Activated naive CD8-positive, alpha-beta T cell treated with anti-CD3 and anti-CD28 coated beads, Interleukin-2, amount 10 ng/mL, durations not matched to agents 7 days and 5 days (primary cell): ENCODE measurements at regions of chr6 and their contacts with region 1.

Region 1: GRCh38 chr6:2940010-2940850 is 31.1 kb downstream of the SERPINB6 start:
- DNase-seq: peak; percentile 72
- ATAC-seq: peak; percentile 82
- H3K4me3 Mint-ChIP-seq: peak overlapping the region; percentile 84
- H3K27ac Mint-ChIP-seq: peak overlapping the region; percentile 96
- H3K4me1 Mint-ChIP-seq: peaks cover 44% of the 10 kb centered on the region
- H3K27me3 Mint-ChIP-seq: no peaks in the 10 kb centered on the region

Region 2: GRCh38 chr6:2841264-2842138 is 98.7 kb before region 1 on chr6 and contains the start of gene SERPINB1:
- POLR2A ChIA-PET with region 1: interaction called, 32 read pairs
- DNase-seq: peak; percentile 85
- ATAC-seq: peak; percentile 88
- H3K4me3 Mint-ChIP-seq: peak within 1 kb of the TSS; percentile 83
- H3K27ac Mint-ChIP-seq: peak within 1 kb of the TSS; percentile 87
- H3K4me1 Mint-ChIP-seq: peaks cover 38% of the 10 kb centered on the region
- H3K27me3 Mint-ChIP-seq: no peaks in the 10 kb centered on the region
- total RNA-seq, gene SERPINB1: 58.6 to 59.8 TPM

Region 3: GRCh38 chr6:2853761-2854395 is 86.4 kb before region 1 on chr6:
- POLR2A ChIA-PET with region 1: interaction called, 28 read pairs
- DNase-seq: peak; percentile 67
- ATAC-seq: peak; percentile 46
- H3K4me3 Mint-ChIP-seq: peak overlapping the region; percentile 60
- H3K27ac Mint-ChIP-seq: peak overlapping the region; percentile 95
- H3K4me1 Mint-ChIP-seq: peaks cover 66% of the 10 kb centered on the region
- H3K27me3 Mint-ChIP-seq: no peaks in the 10 kb centered on the region

Region 4: DNA sequence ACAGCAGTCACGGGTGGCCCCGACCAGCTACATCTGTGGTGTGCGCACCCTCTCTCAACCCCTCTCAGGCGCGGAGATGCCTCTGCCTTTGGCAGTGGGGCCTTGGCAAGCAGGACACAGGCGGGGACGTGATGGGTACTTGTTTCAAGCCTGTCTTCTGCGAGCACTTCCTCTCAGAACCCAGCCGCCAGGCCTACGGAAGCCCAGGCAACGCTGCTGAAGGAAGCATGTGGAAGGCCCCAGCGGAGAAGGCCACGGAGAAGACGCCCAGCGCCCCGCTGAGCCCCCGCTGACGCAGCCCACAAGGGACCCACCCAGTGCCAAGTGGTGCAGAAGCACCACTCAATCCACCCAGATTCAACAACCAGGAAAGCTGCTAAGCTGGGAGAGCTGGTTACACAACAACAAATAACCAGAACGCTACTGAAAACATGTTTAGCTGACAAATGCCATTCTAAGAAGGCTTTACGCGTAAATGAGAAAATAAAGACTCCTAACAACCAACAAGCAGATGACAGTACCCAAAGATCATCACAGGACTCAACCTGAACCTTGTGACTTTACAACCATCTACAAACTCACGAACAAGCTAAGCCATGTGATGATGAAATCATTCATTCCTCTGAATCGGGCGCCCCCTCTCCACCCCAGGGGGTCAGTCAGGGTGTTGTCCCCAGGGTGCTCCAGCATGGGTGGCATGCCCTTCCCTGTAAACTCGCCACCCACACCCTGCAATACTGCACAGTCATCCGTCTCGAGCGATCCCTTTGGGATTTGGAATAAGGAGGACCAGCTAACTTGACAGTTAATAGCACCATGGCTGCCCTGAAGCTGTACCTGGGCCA is 18.3 kb after region 1 on chr6:
- POLR2A ChIA-PET with region 1: interaction called, 18 read pairs
- DNase-seq: no peak
- ATAC-seq: peak; percentile 80
- H3K4me3 Mint-ChIP-seq: peak overlapping the region; percentile 37
- H3K27ac Mint-ChIP-seq: peak overlapping the region; percentile 64
- H3K4me1 Mint-ChIP-seq: peaks cover 13% of the 10 kb centered on the region
- H3K27me3 Mint-ChIP-seq: no peaks in the 10 kb centered on the region

Region 5: DNA sequence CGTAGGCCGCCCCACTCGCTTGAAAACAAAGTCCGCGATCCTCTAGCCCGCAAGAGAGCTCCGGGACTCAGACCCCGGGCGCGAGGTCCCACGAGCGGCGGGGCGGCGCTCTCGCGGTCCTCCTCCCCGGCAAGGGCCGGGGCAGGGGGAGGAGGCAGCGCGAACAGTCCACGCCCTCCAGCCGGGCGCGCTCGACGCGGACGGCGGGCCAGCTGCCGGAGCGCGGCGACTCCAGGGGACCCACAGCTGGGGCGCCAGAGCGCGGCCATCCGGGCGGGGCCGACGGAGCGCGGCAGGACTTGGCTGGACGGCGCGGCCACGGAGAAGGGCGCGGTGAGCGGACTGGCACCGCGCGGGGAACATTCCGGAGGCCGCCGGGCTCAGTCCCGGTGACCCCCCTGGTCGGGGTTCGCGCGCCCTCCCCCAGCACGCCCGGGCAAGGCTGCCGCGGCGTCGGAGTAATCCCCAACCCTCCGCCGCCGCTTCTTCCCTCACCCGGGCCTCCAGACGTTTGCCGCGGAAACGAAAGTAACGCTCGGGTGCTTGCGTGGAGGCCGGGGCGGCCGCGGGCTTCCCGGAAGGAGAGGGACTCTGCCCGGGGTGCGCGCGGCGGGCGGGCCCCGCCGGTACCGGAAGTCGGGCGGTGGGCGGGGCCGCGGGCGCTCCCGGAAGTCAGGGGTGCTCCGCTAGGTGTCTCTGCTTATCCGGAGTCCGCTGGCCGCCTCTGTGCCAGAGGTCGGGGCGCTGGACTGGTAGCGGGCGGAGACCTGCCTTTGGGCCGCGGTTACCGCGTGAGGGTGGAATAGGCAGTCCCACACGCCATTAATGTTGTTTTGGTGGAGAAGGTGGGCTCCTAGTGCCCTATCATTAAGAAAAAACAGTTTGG is 128.3 kb after region 1 on chr6 and contains the start of gene RIPK1:
- POLR2A ChIA-PET with region 1: interaction called, 13 read pairs
- DNase-seq: peak; percentile 99
- ATAC-seq: peak; percentile 80
- H3K4me3 Mint-ChIP-seq: peak within 1 kb of the TSS; percentile 95
- H3K27ac Mint-ChIP-seq: peak within 1 kb of the TSS; percentile 96
- H3K4me1 Mint-ChIP-seq: peaks cover 44% of the 10 kb centered on the region
- H3K27me3 Mint-ChIP-seq: no peaks in the 10 kb centered on the region
- total RNA-seq, gene RIPK1: 31.9 to 32.6 TPM

Region 6: DNA sequence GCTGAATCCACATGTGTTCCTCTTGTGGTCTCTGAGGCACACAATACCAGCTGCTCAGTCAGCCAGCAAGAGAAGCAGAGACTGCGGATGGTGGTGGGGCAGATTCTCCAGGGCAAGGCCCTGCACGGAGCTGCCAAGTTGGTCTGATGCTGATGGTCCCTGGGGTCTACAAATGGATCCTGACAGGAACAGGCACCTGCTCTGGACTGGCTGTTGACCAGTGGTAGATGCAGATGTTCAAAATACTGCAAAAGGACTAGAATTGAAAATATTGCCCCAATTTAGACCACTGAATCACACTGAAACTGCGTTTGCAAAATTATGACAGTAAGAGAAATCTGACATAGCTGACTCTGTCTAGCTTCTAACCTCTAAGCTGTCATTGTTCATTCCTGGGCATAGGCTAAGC is 246.7 kb after region 1 on chr6:
- POLR2A ChIA-PET with region 1: no interaction called
- DNase-seq: no peak
- ATAC-seq: no peak
- H3K4me3 Mint-ChIP-seq: no peak overlapping the region
- H3K27ac Mint-ChIP-seq: no peak overlapping the region
- H3K4me1 Mint-ChIP-seq: no peaks in the 10 kb centered on the region
- H3K27me3 Mint-ChIP-seq: peaks cover 18% of the 10 kb centered on the region

Region 7: DNA sequence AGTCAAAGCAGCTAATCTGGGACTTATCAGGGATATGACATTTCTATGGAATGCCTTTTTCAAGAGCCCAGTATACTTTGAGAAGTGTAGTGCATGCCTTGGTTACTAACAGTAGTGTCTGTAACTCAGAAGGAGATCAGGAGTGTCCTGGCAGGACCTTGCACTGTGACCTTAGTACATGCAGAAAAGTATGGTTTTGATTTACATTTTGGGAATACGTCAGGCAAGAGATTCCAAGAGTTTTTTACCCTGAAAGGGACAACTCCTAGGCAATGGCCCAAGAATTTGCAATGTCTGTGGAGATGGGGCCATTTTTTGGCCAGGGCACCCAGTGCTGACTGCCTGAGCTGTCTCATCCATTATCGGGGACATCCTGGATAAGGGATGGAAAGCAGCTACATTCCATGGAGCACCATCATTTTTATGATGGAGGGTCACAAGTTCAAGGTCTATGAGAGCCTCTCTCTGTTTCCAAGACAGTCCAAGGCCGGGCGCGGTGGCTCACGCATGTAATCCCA is 989.1 kb after region 1 on chr6:
- POLR2A ChIA-PET with region 1: no interaction called
- DNase-seq: no peak
- ATAC-seq: no peak
- H3K4me3 Mint-ChIP-seq: no peak overlapping the region
- H3K27ac Mint-ChIP-seq: no peak overlapping the region
- H3K4me1 Mint-ChIP-seq: no peaks in the 10 kb centered on the region
- H3K27me3 Mint-ChIP-seq: peaks cover 15% of the 10 kb centered on the region